ENCODE measurements at regions of chr16 and their contacts with region 1.

Region 1: GRCh38 chr16:24041826-24042631 is 206.2 kb downstream of the PRKCB start:
- DNase-seq: no peak
- H3K4me3 ChIP-seq: no peak overlapping the region
- H3K27ac ChIP-seq: no peak overlapping the region
- H3K4me1 ChIP-seq: no peaks in the 10 kb centered on the region
- H3K27me3 ChIP-seq: no peaks in the 10 kb centered on the region
- CTCF ChIP-seq: peak; percentile 24 to 54 (median 25)

Region 2: DNA sequence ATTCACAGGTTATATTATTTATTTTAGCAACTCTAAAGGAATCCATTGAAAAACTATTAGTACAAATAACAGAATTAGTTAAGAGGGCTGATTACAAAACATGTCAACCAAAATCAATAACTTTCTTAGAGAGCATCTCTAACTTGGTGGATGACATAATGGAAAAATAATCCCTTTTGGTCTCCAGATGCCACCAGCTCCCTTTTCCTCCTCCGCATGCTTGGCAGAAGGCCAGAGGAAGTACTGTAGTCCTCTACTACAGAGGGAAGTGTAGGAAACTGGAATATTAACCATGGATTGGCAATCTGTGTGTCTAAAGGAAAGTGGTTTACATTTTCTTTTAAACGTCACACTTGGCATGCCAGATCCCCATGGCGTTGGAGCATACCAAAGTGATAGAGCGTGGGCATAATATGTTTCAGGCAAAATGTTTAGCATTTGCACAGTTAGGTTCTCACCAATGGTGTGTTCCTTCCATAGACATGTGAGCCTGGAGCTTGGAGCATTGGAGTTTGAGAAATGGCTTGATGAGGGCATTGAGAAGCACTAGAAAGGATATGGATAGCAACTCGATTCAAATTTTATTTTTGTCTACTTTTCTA is 100.0 kb before region 1 on chr16:
- intact Hi-C with region 1: no loop called
- DNase-seq: no peak
- H3K4me3 ChIP-seq: no peak overlapping the region
- H3K27ac ChIP-seq: no peak overlapping the region
- H3K4me1 ChIP-seq: no peaks in the 10 kb centered on the region
- H3K27me3 ChIP-seq: no peaks in the 10 kb centered on the region
- CTCF ChIP-seq: no peak

Region 3: GRCh38 chr16:23974223-23974622 is 67.8 kb before region 1 on chr16:
- intact Hi-C with region 1: no loop called
- DNase-seq: no peak
- H3K4me3 ChIP-seq: no peak overlapping the region
- H3K27ac ChIP-seq: no peak overlapping the region
- H3K4me1 ChIP-seq: no peaks in the 10 kb centered on the region
- H3K27me3 ChIP-seq: no peaks in the 10 kb centered on the region
- CTCF ChIP-seq: no peak

Region 4: GRCh38 chr16:24504472-24505345 is 462.7 kb after region 1 on chr16:
- intact Hi-C with region 1: loop called (anchors 10 kb)
- DNase-seq: peak in 1 of 2 donors; percentile 72
- H3K4me3 ChIP-seq: no peak overlapping the region
- H3K27ac ChIP-seq: no peak overlapping the region
- H3K4me1 ChIP-seq: peaks cover 0 to 2% of the 10 kb centered on the region in 2 donors
- H3K27me3 ChIP-seq: no peaks in the 10 kb centered on the region
- CTCF ChIP-seq: peak; percentile 55 to 74 (median 65)

Measured in ascending aorta (tissue), 2 donors.